ENCODE measurements at regions of chr13 and their contacts with region 1.

Region 1: GRCh38 chr13:49606747-49607648 is 21.3 kb upstream of the ARL11 start:
- DNase-seq: peak; percentile 92
- H3K4me3 Mint-ChIP-seq: peak overlapping the region; percentile 75
- H3K27ac Mint-ChIP-seq: peak overlapping the region; percentile 56
- H3K4me1 Mint-ChIP-seq: peaks cover 2% of the 10 kb centered on the region
- H3K27me3 Mint-ChIP-seq: no peaks in the 10 kb centered on the region

Region 2: GRCh38 chr13:49240017-49240416 is 367.0 kb before region 1 on chr13:
- CTCF ChIA-PET with region 1: interaction called, 3 read pairs
- intact Hi-C with region 1: loop called (anchors 1 kb)
- DNase-seq: peak; percentile 65
- H3K4me3 Mint-ChIP-seq: no peak overlapping the region
- H3K27ac Mint-ChIP-seq: no peak overlapping the region
- H3K4me1 Mint-ChIP-seq: no peaks in the 10 kb centered on the region
- H3K27me3 Mint-ChIP-seq: peaks cover 3% of the 10 kb centered on the region

Region 3: DNA sequence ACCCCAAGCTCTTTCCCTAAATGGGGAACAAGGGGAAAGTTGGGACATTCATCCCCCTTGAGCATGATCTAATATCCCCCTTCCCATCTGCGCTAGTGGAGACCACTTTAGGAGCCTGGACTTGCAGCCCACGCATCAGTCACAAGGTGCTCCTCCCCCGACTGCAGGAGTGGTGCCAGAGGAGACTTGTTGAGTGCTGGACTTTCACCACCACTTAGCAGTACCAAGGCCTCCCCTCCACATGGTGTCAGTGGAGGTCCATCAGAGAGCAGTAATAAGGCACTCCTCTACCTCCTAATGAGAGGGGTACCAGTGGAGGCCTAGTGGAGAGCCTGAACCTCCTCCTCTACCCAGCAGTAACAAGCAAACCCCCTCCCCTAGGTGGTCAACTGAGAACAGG is 185.6 kb before region 1 on chr13:
- CTCF ChIA-PET with region 1: interaction called, 3 read pairs
- intact Hi-C with region 1: loop called (anchors 1 kb)
- DNase-seq: peak; percentile 36
- H3K4me3 Mint-ChIP-seq: no peak overlapping the region
- H3K27ac Mint-ChIP-seq: no peak overlapping the region
- H3K4me1 Mint-ChIP-seq: no peaks in the 10 kb centered on the region
- H3K27me3 Mint-ChIP-seq: no peaks in the 10 kb centered on the region

Region 4: DNA sequence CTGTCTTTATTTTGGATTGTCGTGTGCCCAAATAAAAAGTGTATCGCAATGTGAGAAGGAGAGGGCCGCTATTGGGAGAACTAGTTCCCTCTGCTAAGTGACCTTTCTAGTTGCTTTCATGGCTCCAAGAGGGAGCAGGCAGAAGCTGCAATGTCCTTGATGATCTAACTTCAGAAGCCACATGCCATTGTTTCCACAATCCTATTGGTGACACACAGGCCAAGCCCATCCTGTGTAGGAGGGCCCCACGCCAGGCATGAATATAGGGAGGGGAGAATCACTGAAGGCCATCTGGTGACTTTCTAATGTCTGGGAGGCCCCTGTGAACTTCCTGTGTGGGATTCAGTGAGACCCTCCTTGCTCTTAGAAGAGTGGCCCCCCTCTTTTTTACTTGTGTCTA is 233.3 kb after region 1 on chr13:
- CTCF ChIA-PET with region 1: no interaction called
- intact Hi-C with region 1: loop called (anchors 5 kb)
- DNase-seq: no peak
- H3K4me3 Mint-ChIP-seq: no peak overlapping the region
- H3K27ac Mint-ChIP-seq: no peak overlapping the region
- H3K4me1 Mint-ChIP-seq: no peaks in the 10 kb centered on the region
- H3K27me3 Mint-ChIP-seq: no peaks in the 10 kb centered on the region

Measured in activated naive CD4-positive, alpha-beta T cell treated with anti-CD3 and anti-CD28 coated beads for 36 hours (primary cell).